Astrocyte of the cerebellum (primary cell): ENCODE measurements at regions of chr2 and their contacts with region 1.

Region 1: GRCh38 chr2:176514805-176515500 is 245.7 kb downstream of the MTX2 start:
- DNase-seq: no peak
- H3K4me3 ChIP-seq: no peak overlapping the region
- CTCF ChIP-seq: no peak

Region 2: GRCh38 chr2:176574484-176575236 is 59.7 kb after region 1 on chr2:
- in situ Hi-C with region 1: loop called (anchors 5 kb)
- DNase-seq: no peak
- H3K4me3 ChIP-seq: no peak overlapping the region
- CTCF ChIP-seq: no peak

Region 3: DNA sequence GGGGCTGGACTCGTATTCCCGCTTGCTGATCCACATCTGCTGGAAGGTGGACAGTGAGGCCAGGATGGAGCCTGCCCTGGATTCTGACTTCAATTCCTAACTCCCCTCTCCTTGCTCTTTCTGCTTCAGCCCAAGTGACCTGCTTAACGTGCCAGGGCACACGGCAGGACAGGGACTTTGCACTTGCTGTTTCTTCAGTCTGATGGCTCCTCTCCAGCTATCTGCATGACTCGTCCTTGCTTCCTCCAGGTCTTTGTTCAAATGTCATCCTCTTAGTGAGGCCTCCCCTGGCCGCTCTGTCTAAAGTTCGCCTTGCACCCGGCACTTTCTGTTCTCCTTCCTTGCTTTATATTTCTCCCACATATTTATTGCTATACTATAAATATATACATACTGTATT is 111.8 kb after region 1 on chr2:
- in situ Hi-C with region 1: no loop called
- DNase-seq: no peak
- H3K4me3 ChIP-seq: no peak overlapping the region
- CTCF ChIP-seq: no peak

Region 4: DNA sequence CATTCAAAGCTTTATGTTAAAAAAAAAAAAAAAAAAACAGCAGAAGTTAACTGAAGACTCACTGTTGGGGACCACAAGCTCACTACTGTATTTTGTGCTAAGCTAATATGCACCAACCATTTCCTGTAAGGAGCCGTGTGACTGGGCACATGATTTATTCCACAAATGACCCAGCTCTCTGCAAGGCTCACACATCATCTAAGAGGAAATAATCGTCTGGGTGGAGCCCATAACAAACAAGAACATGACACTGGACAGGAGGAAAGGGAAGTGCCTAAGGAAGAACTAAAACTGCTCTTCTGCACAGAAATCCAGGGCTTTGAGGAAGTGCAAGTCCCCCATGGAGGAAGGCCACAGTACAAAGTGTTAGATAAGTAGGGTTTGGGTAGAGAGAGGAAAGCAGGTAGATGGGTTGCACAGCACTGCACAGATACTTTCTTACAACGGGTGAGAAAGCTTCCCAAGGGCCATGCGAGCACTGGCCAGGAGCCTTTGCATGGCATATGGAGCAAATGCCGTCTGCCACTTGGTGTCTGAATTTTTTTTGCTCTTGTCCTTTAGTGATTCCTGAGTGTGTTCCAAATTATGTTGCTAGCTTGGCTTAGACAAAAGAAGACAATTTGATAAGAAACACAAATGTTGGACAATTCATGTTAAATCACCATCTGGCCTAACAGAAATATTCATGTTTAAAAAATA is 725.1 kb after region 1 on chr2:
- in situ Hi-C with region 1: no loop called
- DNase-seq: no peak
- H3K4me3 ChIP-seq: no peak overlapping the region
- CTCF ChIP-seq: no peak